ENCODE measurements at regions of chr6 and their contacts with region 1.

Region 1: GRCh38 chr6:63571881-63572732 is at the starts of genes LOC128125822 and PTP4A1:
- DNase-seq: peak; percentile 94
- ATAC-seq: peak; percentile 85
- H3K4me3 Mint-ChIP-seq: peak within 1 kb of the TSS; percentile 92
- H3K27ac Mint-ChIP-seq: peak within 1 kb of the TSS; percentile 97
- H3K4me1 Mint-ChIP-seq: peaks cover 33% of the 10 kb centered on the region
- H3K27me3 Mint-ChIP-seq: no peaks in the 10 kb centered on the region
- CTCF ChIP-seq: no peak
- total RNA-seq, gene PTP4A1: 32.4 and 35.2 TPM in 2 replicates

Region 2: GRCh38 chr6:62298745-62299392 is 1273.2 kb before region 1 on chr6:
- CTCF ChIA-PET with region 1: no interaction called
- POLR2A ChIA-PET with region 1: no interaction called
- intact Hi-C with region 1: loop called (anchors 2 kb)
- DNase-seq: no peak
- ATAC-seq: peak; percentile 66
- H3K4me3 Mint-ChIP-seq: peak overlapping the region; percentile 56
- H3K27ac Mint-ChIP-seq: peak overlapping the region; percentile 86
- H3K4me1 Mint-ChIP-seq: peaks cover 24% of the 10 kb centered on the region
- H3K27me3 Mint-ChIP-seq: no peaks in the 10 kb centered on the region
- CTCF ChIP-seq: no peak

Region 3: DNA sequence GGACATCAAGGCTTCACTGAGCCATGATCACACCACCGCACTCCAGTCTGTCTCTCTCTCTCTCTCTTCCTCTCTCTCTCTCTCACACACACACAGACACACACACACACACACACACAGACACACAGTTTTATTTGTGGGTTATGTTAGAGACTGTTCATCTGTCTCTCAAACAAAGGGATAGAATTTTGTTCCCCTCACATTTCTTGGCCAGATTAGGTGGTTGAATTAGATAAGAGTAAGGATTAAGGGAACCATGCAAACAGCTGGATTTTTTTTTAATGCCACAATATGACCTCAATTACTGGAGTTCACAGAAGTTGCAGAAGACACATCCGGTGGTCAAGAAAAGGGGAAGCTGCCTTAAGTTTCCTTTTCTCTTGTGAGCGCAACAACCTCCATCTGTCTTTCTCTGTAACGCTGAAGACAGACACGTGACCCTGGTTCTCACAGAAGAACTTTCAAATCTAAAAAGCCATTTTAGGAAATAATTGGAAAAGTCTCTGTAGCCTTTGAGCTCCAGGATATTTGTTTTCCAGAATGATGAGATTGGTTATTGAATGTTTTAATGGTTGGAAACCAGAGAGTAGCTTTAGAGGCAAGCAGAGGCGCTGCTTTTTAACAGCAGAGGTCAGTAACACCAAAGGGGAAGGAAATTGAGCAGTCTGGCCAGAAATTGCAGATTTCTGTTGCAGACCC is 219.4 kb before region 1 on chr6:
- CTCF ChIA-PET with region 1: interaction called, 13 read pairs
- POLR2A ChIA-PET with region 1: interaction called, 6 read pairs
- intact Hi-C with region 1: loop called (anchors 1 kb)
- DNase-seq: no peak
- ATAC-seq: peak; percentile 77
- H3K4me3 Mint-ChIP-seq: peak overlapping the region; percentile 69
- H3K27ac Mint-ChIP-seq: peak overlapping the region; percentile 63
- H3K4me1 Mint-ChIP-seq: peaks cover 22% of the 10 kb centered on the region
- H3K27me3 Mint-ChIP-seq: no peaks in the 10 kb centered on the region
- CTCF ChIP-seq: no peak

Region 4: GRCh38 chr6:63504777-63505384 is 67.2 kb before region 1 on chr6:
- CTCF ChIA-PET with region 1: no interaction called
- POLR2A ChIA-PET with region 1: interaction called, 3 read pairs
- intact Hi-C with region 1: loop called (anchors 1 kb)
- DNase-seq: no peak
- ATAC-seq: peak; percentile 71
- H3K4me3 Mint-ChIP-seq: no peak overlapping the region
- H3K27ac Mint-ChIP-seq: peak overlapping the region; percentile 24
- H3K4me1 Mint-ChIP-seq: peaks cover 8% of the 10 kb centered on the region
- H3K27me3 Mint-ChIP-seq: no peaks in the 10 kb centered on the region
- CTCF ChIP-seq: no peak

Region 5: DNA sequence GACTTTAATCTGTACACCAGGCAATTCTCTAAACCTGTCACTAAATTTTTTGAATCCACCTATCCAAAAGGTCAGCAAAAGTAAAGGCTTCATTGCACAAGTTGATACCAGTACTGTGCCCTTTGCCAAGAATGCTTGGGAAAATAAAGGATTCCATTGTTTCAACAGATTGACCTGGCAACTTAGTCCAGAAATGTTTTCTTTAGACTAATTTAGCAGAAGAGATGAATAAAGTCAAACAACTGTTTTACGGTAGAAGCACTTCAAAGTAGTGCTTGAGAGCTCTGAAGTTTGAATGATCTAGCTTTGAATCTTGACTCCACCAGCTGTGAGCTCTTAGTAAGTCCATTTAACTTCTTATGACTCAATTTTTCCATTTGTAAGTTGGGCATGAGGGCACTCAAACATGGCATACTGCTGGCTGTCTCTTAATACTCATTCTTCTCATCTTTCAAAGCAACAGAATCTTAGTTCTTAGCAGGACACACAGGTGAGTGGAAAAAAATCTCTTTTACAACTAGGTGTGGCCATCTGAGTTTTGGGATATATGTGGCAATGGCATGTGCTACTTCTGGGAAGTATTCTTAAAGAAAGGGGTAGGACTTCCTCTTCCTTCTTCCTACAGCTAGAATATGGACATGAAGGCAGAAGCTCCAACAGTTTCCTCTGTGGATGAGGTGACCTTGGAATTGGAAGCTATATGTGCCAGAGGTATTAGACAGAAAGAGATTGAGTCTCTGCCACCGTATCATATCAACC is 55.7 kb before region 1 on chr6:
- CTCF ChIA-PET with region 1: no interaction called
- POLR2A ChIA-PET with region 1: interaction called, 4 read pairs
- intact Hi-C with region 1: loop called (anchors 2 kb)
- DNase-seq: no peak
- ATAC-seq: no peak
- H3K4me3 Mint-ChIP-seq: no peak overlapping the region
- H3K27ac Mint-ChIP-seq: no peak overlapping the region
- H3K4me1 Mint-ChIP-seq: peaks cover 16% of the 10 kb centered on the region
- H3K27me3 Mint-ChIP-seq: no peaks in the 10 kb centered on the region
- CTCF ChIP-seq: no peak

Region 6: GRCh38 chr6:63635588-63636517 is 63.7 kb after region 1 on chr6 and contains the start of gene PHF3:
- CTCF ChIA-PET with region 1: interaction called, 13 read pairs
- POLR2A ChIA-PET with region 1: interaction called, 53 read pairs
- intact Hi-C with region 1: loop called (anchors 1 kb)
- DNase-seq: peak; percentile 89
- ATAC-seq: peak; percentile 88
- H3K4me3 Mint-ChIP-seq: peak within 1 kb of the TSS; percentile 95
- H3K27ac Mint-ChIP-seq: peak within 1 kb of the TSS; percentile 94
- H3K4me1 Mint-ChIP-seq: peaks cover 46% of the 10 kb centered on the region
- H3K27me3 Mint-ChIP-seq: no peaks in the 10 kb centered on the region
- CTCF ChIP-seq: no peak
- total RNA-seq, gene PHF3: 52.4 and 56.7 TPM in 2 replicates

Region 7: DNA sequence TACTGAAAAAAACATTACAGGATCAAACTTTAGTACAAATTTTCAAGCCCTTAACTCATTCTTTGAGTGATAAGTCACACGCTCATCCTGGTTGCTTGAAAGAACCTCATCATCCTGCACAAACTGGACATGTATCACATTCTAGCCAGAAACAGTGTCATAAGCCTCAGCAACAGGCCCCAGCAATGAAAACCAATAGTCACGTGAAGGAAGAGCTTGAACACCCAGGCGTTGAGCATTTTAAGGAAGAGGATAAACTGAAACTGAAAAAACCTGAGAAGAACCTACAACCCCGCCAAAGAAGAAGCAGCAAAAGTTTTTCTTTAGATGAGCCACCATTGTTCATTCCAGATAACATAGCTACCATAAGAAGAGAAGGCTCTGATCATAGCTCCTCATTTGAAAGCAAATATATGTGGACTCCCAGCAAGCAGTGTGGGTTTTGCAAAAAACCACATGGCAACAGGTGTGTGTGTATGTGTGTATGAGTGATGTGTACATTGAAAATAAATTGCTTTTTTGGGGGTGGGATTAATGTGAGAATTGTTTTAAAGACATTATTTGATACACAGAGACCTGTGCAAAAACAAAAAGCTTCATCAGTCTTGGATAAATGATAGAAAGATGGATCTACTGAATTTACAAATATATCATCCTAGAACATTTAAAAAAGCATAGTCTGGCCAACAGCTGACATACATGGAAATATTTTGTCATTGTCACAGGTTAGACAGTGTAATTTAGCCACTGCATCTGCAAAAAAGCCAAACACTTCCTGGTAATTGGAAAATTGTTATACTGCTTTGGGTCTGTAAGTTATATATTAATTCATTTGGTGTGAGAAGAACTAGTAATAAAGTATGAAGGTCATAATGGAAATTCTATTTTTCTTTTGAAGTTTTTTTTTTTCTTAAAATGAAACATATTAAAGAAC is 113.6 kb after region 1 on chr6:
- CTCF ChIA-PET with region 1: interaction called, 3 read pairs
- POLR2A ChIA-PET with region 1: no interaction called
- intact Hi-C with region 1: loop called (anchors 10 kb)
- DNase-seq: no peak
- ATAC-seq: peak; percentile 89
- H3K4me3 Mint-ChIP-seq: peak overlapping the region; percentile 13
- H3K27ac Mint-ChIP-seq: peak overlapping the region; percentile 77
- H3K4me1 Mint-ChIP-seq: peaks cover 45% of the 10 kb centered on the region
- H3K27me3 Mint-ChIP-seq: no peaks in the 10 kb centered on the region
- CTCF ChIP-seq: no peak

Measured in activated B cell treated with CpG ODN at 0.5 μM for 24 hours (primary cell).